B cell (primary cell): ENCODE measurements at regions of chr5 and their contacts with region 1.

Region 1: DNA sequence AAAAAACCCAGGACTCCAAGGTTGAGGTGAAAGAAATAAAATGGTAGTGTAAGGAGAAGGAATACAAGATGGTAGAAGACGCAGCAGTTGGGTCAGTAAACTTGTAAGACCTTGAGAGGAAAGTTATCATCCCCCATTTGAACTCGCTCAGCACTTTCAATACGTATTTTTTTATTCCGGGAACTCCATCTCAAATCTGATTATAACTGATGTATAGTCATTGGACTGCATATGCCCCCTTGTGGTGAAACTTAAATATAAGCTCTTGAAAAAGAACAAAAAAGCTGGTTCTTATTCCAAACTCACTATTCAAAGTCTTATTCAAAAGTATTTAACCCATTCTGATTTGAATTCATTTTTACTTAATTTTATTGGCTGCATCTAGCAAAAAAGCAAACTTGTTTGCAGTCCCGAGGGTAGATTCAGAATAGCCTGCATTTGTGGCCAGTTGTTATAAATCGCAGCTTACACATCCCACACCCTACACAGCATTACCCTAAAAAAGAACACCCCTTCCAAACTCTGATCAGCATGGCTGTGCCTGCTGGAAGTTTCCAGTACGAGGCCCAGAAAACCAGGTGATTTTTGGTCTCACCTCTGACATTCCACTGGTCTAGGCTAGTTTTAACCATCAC is 118.0 kb downstream of the ESM1 start:
- DNase-seq: peak; percentile 75
- ATAC-seq: peak; percentile 60
- H3K4me3 ChIP-seq: peak overlapping the region in 3 of 5 experiments; percentile 11 to 32 (median 20)
- H3K4me3 Mint-ChIP-seq: peak overlapping the region; percentile 32
- H3K27ac ChIP-seq: no peak overlapping the region
- H3K27ac Mint-ChIP-seq: no peak overlapping the region
- H3K4me1 ChIP-seq: peaks cover 3 to 5% of the 10 kb centered on the region in 2 donors
- H3K4me1 Mint-ChIP-seq: peaks cover 6% of the 10 kb centered on the region
- H3K27me3 ChIP-seq: peaks cover 0 to 5% (median 2%) of the 10 kb centered on the region in 4 experiments
- H3K27me3 Mint-ChIP-seq: peaks cover 34% of the 10 kb centered on the region
- CTCF ChIP-seq: peak; percentile 81

Region 2: DNA sequence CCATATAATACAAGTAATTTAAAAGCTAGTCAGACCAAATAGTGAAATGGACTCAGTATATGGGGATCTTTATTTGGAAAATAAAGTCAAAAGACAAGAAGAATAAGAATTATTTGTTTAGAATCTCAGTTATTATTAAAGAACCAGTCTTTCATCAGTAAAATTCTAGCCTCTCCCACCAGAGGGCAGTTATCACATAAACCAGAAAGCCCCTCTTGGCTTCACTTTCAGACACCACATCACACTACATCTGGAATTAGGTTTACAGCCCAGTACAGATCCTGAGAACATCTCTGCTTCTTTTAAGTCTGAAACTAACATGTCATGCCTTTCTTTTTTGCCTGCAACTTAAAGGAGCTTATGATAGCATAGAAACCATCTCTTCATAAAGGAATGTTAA is 424.2 kb before region 1 on chr5:
- CTCF ChIA-PET with region 1: interaction called, 18 read pairs
- POLR2A ChIA-PET with region 1: no interaction called
- intact Hi-C with region 1: loop called (anchors 1 kb)
- DNase-seq: peak; percentile 28
- ATAC-seq: no peak
- H3K4me3 ChIP-seq: no peak overlapping the region
- H3K4me3 Mint-ChIP-seq: no peak overlapping the region
- H3K27ac ChIP-seq: no peak overlapping the region
- H3K27ac Mint-ChIP-seq: no peak overlapping the region
- H3K4me1 ChIP-seq: peaks cover 14 to 17% of the 10 kb centered on the region in 2 donors
- H3K4me1 Mint-ChIP-seq: peaks cover 23% of the 10 kb centered on the region
- H3K27me3 ChIP-seq: no peaks in the 10 kb centered on the region
- H3K27me3 Mint-ChIP-seq: no peaks in the 10 kb centered on the region
- CTCF ChIP-seq: peak; percentile 51

Region 3: DNA sequence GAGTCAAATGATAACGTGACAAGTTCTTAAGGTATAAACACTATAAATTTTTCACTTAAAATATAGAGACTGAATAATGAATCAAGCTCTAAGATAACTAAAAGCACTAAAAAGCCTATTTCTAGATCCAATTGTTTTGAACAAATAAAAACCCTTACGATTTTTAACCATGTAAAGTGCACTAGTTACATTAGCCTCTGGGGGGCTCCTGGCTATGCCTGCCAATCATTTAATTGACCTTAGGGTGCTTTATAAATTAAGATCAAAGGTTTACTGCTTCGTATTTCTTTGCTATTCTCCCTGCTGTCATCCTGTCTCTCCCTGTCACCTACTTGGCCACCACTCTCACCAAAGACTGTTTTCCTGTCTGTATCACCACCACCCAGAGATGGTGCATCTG is 15.4 kb before region 1 on chr5:
- CTCF ChIA-PET with region 1: interaction called, 11 read pairs
- POLR2A ChIA-PET with region 1: no interaction called
- intact Hi-C with region 1: no loop called
- DNase-seq: no peak
- ATAC-seq: no peak
- H3K4me3 ChIP-seq: no peak overlapping the region
- H3K4me3 Mint-ChIP-seq: no peak overlapping the region
- H3K27ac ChIP-seq: no peak overlapping the region
- H3K27ac Mint-ChIP-seq: no peak overlapping the region
- H3K4me1 ChIP-seq: no peaks in the 10 kb centered on the region
- H3K4me1 Mint-ChIP-seq: no peaks in the 10 kb centered on the region
- H3K27me3 ChIP-seq: peaks cover 0 to 8% (median 7%) of the 10 kb centered on the region in 4 experiments
- H3K27me3 Mint-ChIP-seq: peaks cover 37% of the 10 kb centered on the region
- CTCF ChIP-seq: no peak